ENCODE measurements at regions of chr5 and their contacts with region 1.

Region 1: GRCh38 chr5:35926389-35927051 is 11.9 kb downstream of the CAPSL start:
- DNase-seq: peak; percentile 91
- H3K4me3 Mint-ChIP-seq: peak overlapping the region; percentile 50
- H3K27ac Mint-ChIP-seq: no peak overlapping the region
- H3K4me1 Mint-ChIP-seq: peaks cover 26% of the 10 kb centered on the region
- H3K27me3 Mint-ChIP-seq: peaks cover 7% of the 10 kb centered on the region

Region 2: GRCh38 chr5:35003018-35003957 is 923.2 kb before region 1 on chr5:
- intact Hi-C with region 1: loop called (anchors 5 kb)
- DNase-seq: peak; percentile 89
- H3K4me3 Mint-ChIP-seq: no peak overlapping the region
- H3K27ac Mint-ChIP-seq: no peak overlapping the region
- H3K4me1 Mint-ChIP-seq: no peaks in the 10 kb centered on the region
- H3K27me3 Mint-ChIP-seq: peaks cover 20% of the 10 kb centered on the region

Region 3: GRCh38 chr5:35617435-35618303 is 308.9 kb before region 1 on chr5 and contains the start of gene SPEF2:
- intact Hi-C with region 1: loop called (anchors 1 kb)
- DNase-seq: peak; percentile 93
- H3K4me3 Mint-ChIP-seq: peak within 1 kb of the TSS; percentile 87
- H3K27ac Mint-ChIP-seq: peak within 1 kb of the TSS; percentile 89
- H3K4me1 Mint-ChIP-seq: peaks cover 23% of the 10 kb centered on the region
- H3K27me3 Mint-ChIP-seq: no peaks in the 10 kb centered on the region
- total RNA-seq, gene SPEF2: 5.5 and 5.8 TPM in 2 replicates

Region 4: DNA sequence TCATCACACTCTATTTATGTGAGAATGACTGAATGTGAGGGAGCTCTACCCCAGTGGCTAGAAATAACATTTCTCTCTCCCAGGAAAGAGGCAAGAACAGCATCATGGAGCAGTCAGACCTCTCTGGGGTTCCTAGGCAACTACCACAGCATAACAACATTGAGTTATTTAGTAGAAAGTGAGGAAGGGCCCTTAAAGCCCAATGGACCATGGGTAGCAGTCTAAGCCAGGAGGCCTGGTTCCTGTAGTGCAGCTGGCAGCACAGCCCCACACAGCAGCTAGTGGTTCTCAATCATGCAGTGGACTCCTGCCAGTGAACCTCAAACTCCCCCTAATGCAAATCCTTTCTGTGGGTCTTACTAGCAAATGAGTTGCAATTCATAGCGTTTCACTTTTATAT is 253.5 kb before region 1 on chr5:
- intact Hi-C with region 1: loop called (anchors 5 kb)
- DNase-seq: peak; percentile 86
- H3K4me3 Mint-ChIP-seq: peak overlapping the region; percentile 51
- H3K27ac Mint-ChIP-seq: peak overlapping the region; percentile 80
- H3K4me1 Mint-ChIP-seq: peaks cover 45% of the 10 kb centered on the region
- H3K27me3 Mint-ChIP-seq: no peaks in the 10 kb centered on the region

Region 5: DNA sequence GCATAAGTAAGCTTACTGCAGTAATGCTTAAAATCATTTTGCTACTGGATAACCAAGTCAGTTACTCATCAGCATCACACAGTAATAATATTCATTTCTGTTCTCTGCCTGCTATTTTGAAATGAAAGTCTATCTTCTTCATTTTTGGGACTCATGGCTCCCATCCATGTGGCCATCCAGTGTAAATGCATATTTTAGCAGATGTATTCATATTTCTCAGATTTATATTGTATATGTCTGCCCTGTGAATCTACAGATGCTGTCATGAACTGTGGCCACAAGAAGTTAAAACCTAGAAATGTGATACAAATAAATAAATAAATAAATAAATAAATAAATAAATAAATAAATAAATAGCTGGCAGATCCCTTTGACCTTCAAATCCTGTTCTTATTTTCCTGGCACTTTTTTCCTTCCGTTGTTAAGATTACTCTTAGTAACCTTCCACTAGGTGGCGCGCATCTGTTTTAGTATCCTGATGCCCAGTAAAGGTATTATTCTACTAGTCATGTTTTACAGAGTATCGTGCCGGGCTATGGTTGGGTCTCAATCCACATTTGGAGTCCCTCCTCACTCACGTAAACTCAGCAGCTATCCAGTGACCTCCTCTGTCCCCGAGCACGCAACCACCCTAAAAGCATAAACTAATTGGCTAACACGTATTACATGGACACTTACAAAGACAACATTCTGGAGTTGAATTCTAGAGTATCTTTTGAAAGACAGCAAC is 149.0 kb before region 1 on chr5:
- intact Hi-C with region 1: loop called (anchors 1 kb)
- DNase-seq: peak; percentile 91
- H3K4me3 Mint-ChIP-seq: peak overlapping the region; percentile 4
- H3K27ac Mint-ChIP-seq: peak overlapping the region; percentile 49
- H3K4me1 Mint-ChIP-seq: peaks cover 56% of the 10 kb centered on the region
- H3K27me3 Mint-ChIP-seq: no peaks in the 10 kb centered on the region

Region 6: DNA sequence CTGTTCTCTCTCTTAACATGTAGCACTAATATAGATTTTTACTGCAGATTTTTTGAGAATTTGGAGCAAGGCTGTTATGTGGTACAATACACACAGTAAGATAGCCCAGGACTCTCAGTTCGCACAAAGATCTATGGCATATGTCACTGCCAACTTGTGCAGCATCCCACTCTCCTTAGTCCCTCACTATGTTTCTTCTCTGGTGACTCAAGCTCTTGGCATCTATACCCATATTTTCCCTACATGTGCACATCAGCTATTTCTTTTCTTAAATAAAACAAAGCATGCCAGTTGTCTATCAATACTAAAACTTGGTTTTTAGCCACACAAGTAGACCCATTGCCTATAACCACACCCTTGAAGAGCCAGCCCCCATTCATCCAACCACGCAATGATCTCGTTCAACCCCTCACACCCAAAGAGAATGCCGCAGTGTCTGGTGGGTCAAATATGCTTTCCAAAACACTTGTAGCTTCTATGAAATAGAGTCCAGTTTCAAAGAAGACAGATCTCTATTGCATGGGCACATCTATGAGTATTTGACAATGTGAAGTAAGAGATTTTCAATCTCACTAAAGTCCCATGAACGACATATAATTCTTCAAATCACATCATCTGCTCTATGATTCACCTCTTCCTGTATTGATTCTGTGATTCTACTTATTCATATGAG is 88.0 kb before region 1 on chr5:
- intact Hi-C with region 1: loop called (anchors 2 kb)
- DNase-seq: peak; percentile 58
- H3K4me3 Mint-ChIP-seq: peak overlapping the region; percentile 39
- H3K27ac Mint-ChIP-seq: peak overlapping the region; percentile 88
- H3K4me1 Mint-ChIP-seq: peaks cover 53% of the 10 kb centered on the region
- H3K27me3 Mint-ChIP-seq: no peaks in the 10 kb centered on the region

Region 7: GRCh38 chr5:35902046-35902676 is 24.4 kb before region 1 on chr5:
- intact Hi-C with region 1: loop called (anchors 1 kb)
- DNase-seq: peak; percentile 87
- H3K4me3 Mint-ChIP-seq: peak overlapping the region; percentile 36
- H3K27ac Mint-ChIP-seq: peak overlapping the region; percentile 79
- H3K4me1 Mint-ChIP-seq: peaks cover 76% of the 10 kb centered on the region
- H3K27me3 Mint-ChIP-seq: no peaks in the 10 kb centered on the region

Measured in activated CD4-positive, alpha-beta T cell treated with anti-CD3 and anti-CD28 coated beads, Interleukin-2, amount 10 ng/mL, durations not matched to agents 24 days and 14 days (primary cell).